B cell (primary cell): ENCODE measurements at regions of chr9 and their contacts with region 1.

Region 1: DNA sequence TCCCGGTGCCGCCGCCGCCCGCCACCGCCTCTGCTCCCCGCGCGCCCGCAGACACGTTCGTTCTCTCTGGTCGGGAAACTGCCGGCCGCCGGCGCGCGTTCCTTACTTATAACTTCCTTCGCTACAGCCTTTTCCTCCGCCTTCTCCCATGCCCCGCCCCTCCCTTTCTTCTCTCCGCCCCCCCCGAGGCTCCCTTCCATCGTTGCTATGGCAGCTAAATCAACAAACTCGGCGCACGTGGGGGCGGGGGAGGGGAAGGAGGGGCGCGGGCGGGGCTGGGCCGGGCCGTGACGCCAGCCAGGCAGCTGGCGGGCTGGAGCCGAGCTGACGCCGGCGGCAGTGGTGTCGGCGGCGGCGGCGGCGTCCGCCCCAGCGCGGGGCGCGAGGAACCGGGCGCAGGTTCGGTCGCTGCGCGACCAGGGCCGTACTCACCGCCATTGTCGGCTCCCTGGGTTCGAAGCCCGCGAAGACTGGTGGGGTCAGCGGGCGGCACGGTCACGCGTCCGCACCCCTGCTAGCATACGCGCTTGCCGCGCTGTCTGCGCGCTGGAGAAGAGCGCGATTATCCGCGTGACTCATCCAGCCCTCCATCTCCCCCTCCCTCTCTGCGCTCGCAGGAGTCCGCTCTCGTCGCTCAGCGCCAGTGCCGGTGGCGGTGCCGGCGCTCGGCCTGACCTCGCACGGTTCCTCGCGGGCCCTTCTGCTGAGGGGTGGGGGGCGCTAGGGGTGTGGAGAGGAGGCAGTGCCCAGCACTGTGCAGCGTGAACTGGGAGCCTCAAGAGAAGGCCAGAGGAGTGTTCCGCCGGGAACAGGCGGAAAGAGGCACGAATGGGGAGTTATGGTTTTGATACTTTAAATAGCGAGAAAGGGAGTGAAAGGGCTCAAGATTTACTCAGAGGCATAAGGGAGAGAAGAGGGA is at the start of gene KLF4:
- DNase-seq: peak; percentile 86
- ATAC-seq: peak; percentile 74
- H3K4me3 ChIP-seq: peak within 1 kb of the TSS; percentile 53 to 86 (median 68)
- H3K4me3 Mint-ChIP-seq: peak within 1 kb of the TSS; percentile 87
- H3K27ac ChIP-seq: peak within 1 kb of the TSS in 1 of 2 donors; percentile 51
- H3K27ac Mint-ChIP-seq: peak within 1 kb of the TSS; percentile 78
- H3K4me1 ChIP-seq: peaks cover 35 to 42% of the 10 kb centered on the region in 2 donors
- H3K4me1 Mint-ChIP-seq: peaks cover 22% of the 10 kb centered on the region
- H3K27me3 ChIP-seq: peaks cover 0 to 51% (median 26%) of the 10 kb centered on the region in 4 experiments
- H3K27me3 Mint-ChIP-seq: peaks cover 49% of the 10 kb centered on the region
- CTCF ChIP-seq: no peak
- total RNA-seq, gene KLF4: 3.7 and 3.8 TPM in 2 replicates

Region 2: GRCh38 chr9:107478805-107479204 is 11.1 kb before region 1 on chr9:
- CTCF ChIA-PET with region 1: no interaction called
- POLR2A ChIA-PET with region 1: no interaction called
- intact Hi-C with region 1: no loop called
- DNase-seq: no peak
- ATAC-seq: no peak
- H3K4me3 ChIP-seq: no peak overlapping the region
- H3K4me3 Mint-ChIP-seq: no peak overlapping the region
- H3K27ac ChIP-seq: no peak overlapping the region
- H3K27ac Mint-ChIP-seq: no peak overlapping the region
- H3K4me1 ChIP-seq: no peaks in the 10 kb centered on the region
- H3K4me1 Mint-ChIP-seq: no peaks in the 10 kb centered on the region
- H3K27me3 ChIP-seq: no peaks in the 10 kb centered on the region
- H3K27me3 Mint-ChIP-seq: peaks cover 10% of the 10 kb centered on the region
- CTCF ChIP-seq: no peak

Region 3: GRCh38 chr9:107874591-107875369 is 384.8 kb after region 1 on chr9:
- CTCF ChIA-PET with region 1: no interaction called
- POLR2A ChIA-PET with region 1: no interaction called
- intact Hi-C with region 1: loop called (anchors 10 kb)
- DNase-seq: peak; percentile 66
- ATAC-seq: peak; percentile 69
- H3K4me3 ChIP-seq: peak overlapping the region in 2 of 5 experiments; percentile 26 to 34
- H3K4me3 Mint-ChIP-seq: peak overlapping the region; percentile 40
- H3K27ac ChIP-seq: no peak overlapping the region
- H3K27ac Mint-ChIP-seq: peak overlapping the region; percentile 4
- H3K4me1 ChIP-seq: peaks cover 66 to 69% of the 10 kb centered on the region in 2 donors
- H3K4me1 Mint-ChIP-seq: peaks cover 76% of the 10 kb centered on the region
- H3K27me3 ChIP-seq: no peaks in the 10 kb centered on the region
- H3K27me3 Mint-ChIP-seq: no peaks in the 10 kb centered on the region
- CTCF ChIP-seq: no peak